Naive thymus-derived CD8-positive, alpha-beta T cell (primary cell): ENCODE measurements at regions of chr4 and their contacts with region 1.

Region 1: DNA sequence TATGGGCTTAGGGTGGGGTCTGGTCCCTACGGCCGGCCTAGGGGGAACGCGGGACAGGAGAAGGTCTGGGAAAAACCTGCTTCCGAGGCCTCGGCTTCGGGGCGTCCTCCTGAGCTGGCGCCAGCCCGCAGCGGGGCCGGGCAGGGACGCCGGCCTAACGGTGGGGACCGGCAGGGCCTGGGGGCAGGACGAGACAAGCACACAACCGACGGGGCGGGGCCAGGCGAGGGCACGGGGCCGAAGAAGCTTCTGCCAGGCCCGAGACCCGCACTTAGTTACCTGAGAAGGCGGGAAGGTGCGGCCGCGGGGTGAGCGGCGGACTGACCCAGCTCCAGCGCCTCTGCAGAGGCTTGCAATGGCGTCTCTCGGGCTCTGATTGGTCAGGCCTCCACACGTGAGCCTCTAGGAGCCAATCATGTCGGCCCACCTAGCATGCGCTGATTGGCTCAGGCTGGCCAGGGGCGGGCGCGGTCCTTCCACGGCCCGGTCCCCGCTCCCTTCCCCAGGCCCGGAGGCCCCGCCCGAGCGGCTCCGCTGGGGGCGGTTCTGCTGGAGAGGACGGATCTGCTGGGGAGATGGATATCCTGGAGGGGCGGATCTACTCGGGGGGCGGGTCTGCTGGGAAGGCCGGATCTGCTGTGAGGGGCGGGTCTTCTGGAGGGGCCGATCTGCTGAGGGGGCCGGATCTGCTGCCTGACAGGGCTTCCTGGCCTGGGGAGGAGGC is 44.3 kb downstream of the CPLX1 start:
- DNase-seq: peak; percentile 95 to 100 (median 98)
- ATAC-seq: peak; percentile 93 to 95
- H3K4me3 Mint-ChIP-seq: peak overlapping the region; percentile 84 to 96 (median 92)
- H3K27ac Mint-ChIP-seq: peak overlapping the region; percentile 88 to 98 (median 95)
- H3K4me1 Mint-ChIP-seq: peaks cover 15 to 64% (median 58%) of the 10 kb centered on the region in 4 donors
- H3K27me3 Mint-ChIP-seq: peaks cover 7 to 24% (median 14%) of the 10 kb centered on the region in 5 donors

Region 2: DNA sequence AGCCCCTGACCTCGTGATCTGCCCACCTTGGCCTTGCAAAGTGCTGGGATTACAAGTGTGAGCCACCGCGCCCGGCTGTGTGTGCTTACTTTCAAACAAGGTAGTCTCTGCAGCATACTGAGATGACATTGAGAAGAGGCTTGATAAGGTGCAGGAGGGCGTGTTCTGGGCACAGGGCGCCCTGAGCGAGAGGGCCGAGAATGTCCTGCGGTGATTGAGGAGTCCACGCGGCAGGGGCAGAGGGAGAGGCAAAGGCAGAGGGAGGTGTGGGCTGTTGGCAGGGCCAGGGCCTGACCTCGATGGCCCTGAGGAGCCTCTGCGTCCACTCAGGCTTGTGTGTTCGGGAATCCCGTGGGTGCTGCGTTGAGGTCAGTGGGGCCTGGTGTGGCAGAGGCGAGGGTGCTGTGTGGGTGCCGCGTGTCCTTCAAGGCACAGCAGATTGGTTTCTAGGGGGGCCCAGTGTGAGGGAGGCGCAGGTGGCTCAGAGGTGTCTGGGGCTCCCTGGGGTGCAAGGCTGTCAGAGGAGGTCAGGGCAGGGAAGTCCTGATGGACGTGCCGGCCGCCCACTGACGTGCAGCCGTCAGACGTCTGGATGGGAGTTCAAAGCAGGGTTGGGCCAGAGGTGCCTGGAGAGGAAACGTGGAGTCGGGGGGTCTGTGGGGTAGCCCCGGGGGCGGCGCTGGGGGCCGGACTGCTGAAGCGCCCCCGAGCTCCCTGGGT is 63.9 kb before region 1 on chr4:
- POLR2A ChIA-PET with region 1: no interaction called
- DNase-seq: peak in 1 of 10 donors; percentile 34
- ATAC-seq: no peak
- H3K4me3 Mint-ChIP-seq: no peak overlapping the region
- H3K27ac Mint-ChIP-seq: peak overlapping the region in 3 of 10 donors; percentile 66 to 81 (median 73)
- H3K4me1 Mint-ChIP-seq: peaks cover 17 to 47% (median 32%) of the 10 kb centered on the region in 4 donors
- H3K27me3 Mint-ChIP-seq: no peaks in the 10 kb centered on the region

Region 3: DNA sequence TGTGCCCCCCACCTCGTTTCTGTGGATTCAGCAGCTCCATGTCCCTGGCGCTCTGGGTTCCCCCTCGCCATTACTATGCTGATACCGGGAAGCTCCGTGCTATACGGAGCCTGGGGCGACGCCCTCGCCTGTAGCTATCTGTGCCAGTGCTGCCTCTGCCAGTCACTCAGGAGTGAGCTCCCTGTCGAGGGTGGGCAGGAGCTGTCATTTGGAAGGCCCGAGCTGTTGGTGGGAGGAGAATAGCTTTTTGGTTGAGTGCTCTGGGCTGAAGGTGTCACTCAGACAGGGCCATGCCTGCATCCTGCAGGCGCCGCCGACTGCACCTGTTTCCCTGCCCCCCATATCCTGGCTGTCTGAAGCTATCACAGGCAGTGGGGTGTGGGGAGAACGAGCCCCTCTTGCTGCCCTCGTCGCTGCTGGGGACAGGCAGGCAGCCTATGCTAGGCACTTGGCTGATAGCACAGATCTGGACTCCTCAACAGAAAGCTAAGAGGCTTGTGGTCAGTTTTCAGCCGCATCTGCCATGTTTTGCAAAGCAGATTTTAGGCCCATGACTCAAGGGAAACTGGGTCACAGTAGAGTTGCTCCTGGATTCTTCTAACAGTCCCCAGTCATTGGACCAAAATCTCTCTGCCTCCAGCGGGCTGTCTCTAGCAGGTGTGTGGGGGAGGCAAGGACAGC is 12.4 kb after region 1 on chr4:
- POLR2A ChIA-PET with region 1: interaction called, 20 read pairs
- DNase-seq: no peak
- ATAC-seq: peak in 1 of 2 donors; percentile 42
- H3K4me3 Mint-ChIP-seq: peak overlapping the region in 9 of 10 donors; percentile 1 to 80 (median 49)
- H3K27ac Mint-ChIP-seq: no peak overlapping the region
- H3K4me1 Mint-ChIP-seq: peaks cover 16 to 34% (median 31%) of the 10 kb centered on the region in 4 donors
- H3K27me3 Mint-ChIP-seq: peaks cover 20 to 41% (median 35%) of the 10 kb centered on the region in 5 donors

Region 4: GRCh38 chr4:931960-932712 is 150.5 kb after region 1 on chr4 and contains the starts of genes GAK and TMEM175:
- POLR2A ChIA-PET with region 1: interaction called, 10 read pairs
- DNase-seq: peak; percentile 94 to 98 (median 97)
- ATAC-seq: peak; percentile 92
- H3K4me3 Mint-ChIP-seq: peak within 1 kb of the TSS; percentile 92 to 98 (median 94)
- H3K27ac Mint-ChIP-seq: peak within 1 kb of the TSS; percentile 89 to 99 (median 96)
- H3K4me1 Mint-ChIP-seq: peaks cover 28 to 83% (median 51%) of the 10 kb centered on the region in 4 donors
- H3K27me3 Mint-ChIP-seq: peaks cover 0 to 5% (median 0%) of the 10 kb centered on the region in 5 donors
- polyA plus RNA-seq, gene GAK: 45.0 to 71.0 (median 57.6) TPM
- polyA plus RNA-seq, gene TMEM175: 6.4 to 14.7 (median 11.5) TPM